Transverse colon (tissue), 4 donors: ENCODE measurements at regions of chr15 and their contacts with region 1.

Region 1: GRCh38 chr15:75639709-75640482 is at the start of gene IMP3:
- DNase-seq: peak; percentile 96
- H3K4me3 ChIP-seq: peak within 1 kb of the TSS; percentile 56 to 90 (median 78)
- H3K27ac ChIP-seq: peak within 1 kb of the TSS; percentile 94 to 99 (median 96)
- H3K4me1 ChIP-seq: peaks cover 18 to 40% (median 33%) of the 10 kb centered on the region in 4 donors
- H3K27me3 ChIP-seq: no peaks in the 10 kb centered on the region
- CTCF ChIP-seq: no peak
- EP300 ChIP-seq: no peak
- POLR2A ChIP-seq: peak; percentile 99
- total RNA-seq, gene IMP3: 37.2 to 131 (median 108) TPM

Region 2: GRCh38 chr15:75367913-75368688 is 271.8 kb before region 1 on chr15 and contains the start of gene MAN2C1:
- in situ Hi-C with region 1: loop called in 3 of 4 experiments (anchors 25 kb)
- intact Hi-C with region 1: no loop called
- DNase-seq: peak; percentile 99
- H3K4me3 ChIP-seq: peak within 1 kb of the TSS; percentile 43 to 86 (median 83)
- H3K27ac ChIP-seq: peak within 1 kb of the TSS; percentile 94 to 99 (median 99)
- H3K4me1 ChIP-seq: peaks cover 8 to 22% (median 18%) of the 10 kb centered on the region in 4 donors
- H3K27me3 ChIP-seq: no peaks in the 10 kb centered on the region
- CTCF ChIP-seq: peak in 4 of 5 experiments; percentile 61 to 90 (median 76)
- EP300 ChIP-seq: no peak
- POLR2A ChIP-seq: peak; percentile 98
- total RNA-seq, gene MAN2C1: 215 to 559 (median 411) TPM

Region 3: GRCh38 chr15:75672646-75673425 is 32.9 kb after region 1 on chr15:
- in situ Hi-C with region 1: loop called in 1 of 4 experiments (anchors 5 kb)
- intact Hi-C with region 1: no loop called
- DNase-seq: no peak
- H3K4me3 ChIP-seq: no peak overlapping the region
- H3K27ac ChIP-seq: peak overlapping the region; percentile 78 to 88 (median 83)
- H3K4me1 ChIP-seq: peaks cover 9 to 25% (median 21%) of the 10 kb centered on the region in 4 donors
- H3K27me3 ChIP-seq: no peaks in the 10 kb centered on the region
- CTCF ChIP-seq: no peak
- EP300 ChIP-seq: no peak
- POLR2A ChIP-seq: no peak

Region 4: GRCh38 chr15:75684642-75685041 is 44.7 kb after region 1 on chr15:
- in situ Hi-C with region 1: no loop called
- intact Hi-C with region 1: loop called (anchors 5 kb)
- DNase-seq: no peak
- H3K4me3 ChIP-seq: no peak overlapping the region
- H3K27ac ChIP-seq: no peak overlapping the region
- H3K4me1 ChIP-seq: peaks cover 0 to 10% (median 4%) of the 10 kb centered on the region in 4 donors
- H3K27me3 ChIP-seq: no peaks in the 10 kb centered on the region
- CTCF ChIP-seq: no peak
- EP300 ChIP-seq: no peak
- POLR2A ChIP-seq: no peak